ENCODE measurements at regions of chr5 and their contacts with region 1.

Region 1: DNA sequence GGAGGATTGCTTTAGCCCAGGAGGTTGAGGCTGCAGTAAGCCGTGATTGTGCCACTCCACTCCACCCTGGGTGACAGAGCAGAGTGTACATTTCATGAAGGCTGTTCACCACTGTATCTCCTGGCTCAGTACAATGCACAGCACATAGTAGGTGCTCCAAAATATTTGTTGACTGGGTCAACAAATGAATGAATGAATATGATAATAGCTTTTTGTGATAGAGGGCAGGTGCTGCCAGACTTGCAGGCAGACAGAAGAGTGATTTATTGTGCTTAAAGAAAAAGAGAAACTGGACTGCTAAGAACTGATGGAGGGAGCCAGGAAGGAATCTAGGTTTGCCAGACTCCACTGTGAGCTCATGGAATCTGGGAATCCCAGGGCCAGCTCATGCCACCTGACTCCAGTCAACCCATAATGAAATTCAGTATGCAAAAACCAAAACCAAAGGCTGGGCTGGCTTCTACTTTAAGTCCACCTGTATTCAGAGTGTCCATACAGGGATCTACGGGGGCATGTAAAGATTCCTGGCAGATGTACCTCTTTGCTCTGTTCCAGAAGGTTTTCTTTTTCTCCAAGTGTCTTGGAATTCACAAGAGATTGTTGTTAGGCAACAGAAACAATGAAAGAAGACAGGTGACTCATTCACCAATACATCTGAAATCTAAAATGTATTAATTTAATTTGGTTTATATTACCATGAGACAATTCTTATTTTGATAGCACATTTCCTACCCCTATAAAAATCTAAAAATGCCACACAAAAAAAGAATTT is 15.5 kb upstream of the CTNNA1 start:
- DNase-seq: no peak
- ATAC-seq: no peak
- H3K4me3 ChIP-seq: no peak overlapping the region
- H3K4me3 Mint-ChIP-seq: no peak overlapping the region
- H3K27ac ChIP-seq: no peak overlapping the region
- H3K27ac Mint-ChIP-seq: no peak overlapping the region
- H3K4me1 ChIP-seq: no peaks in the 10 kb centered on the region
- H3K4me1 Mint-ChIP-seq: peaks cover 8% of the 10 kb centered on the region
- H3K27me3 ChIP-seq: no peaks in the 10 kb centered on the region
- H3K27me3 Mint-ChIP-seq: peaks cover 25% of the 10 kb centered on the region
- CTCF ChIP-seq: no peak

Region 2: GRCh38 chr5:138824924-138825863 is 87.5 kb after region 1 on chr5:
- CTCF ChIA-PET with region 1: no interaction called
- POLR2A ChIA-PET with region 1: interaction called, 11 read pairs
- intact Hi-C with region 1: no loop called
- DNase-seq: peak in 2 of 9 experiments; percentile 6 to 30
- ATAC-seq: no peak
- H3K4me3 ChIP-seq: no peak overlapping the region
- H3K4me3 Mint-ChIP-seq: no peak overlapping the region
- H3K27ac ChIP-seq: no peak overlapping the region
- H3K27ac Mint-ChIP-seq: no peak overlapping the region
- H3K4me1 ChIP-seq: no peaks in the 10 kb centered on the region
- H3K4me1 Mint-ChIP-seq: no peaks in the 10 kb centered on the region
- H3K27me3 ChIP-seq: no peaks in the 10 kb centered on the region
- H3K27me3 Mint-ChIP-seq: peaks cover 12% of the 10 kb centered on the region
- CTCF ChIP-seq: peak; percentile 91

Measured in CD8-positive, alpha-beta T cell (primary cell).